Activated B cell treated with CpG ODN at 0.5 μM for 24 hours (primary cell): ENCODE measurements at regions of chr2 and their contacts with region 1.

Region 1: DNA sequence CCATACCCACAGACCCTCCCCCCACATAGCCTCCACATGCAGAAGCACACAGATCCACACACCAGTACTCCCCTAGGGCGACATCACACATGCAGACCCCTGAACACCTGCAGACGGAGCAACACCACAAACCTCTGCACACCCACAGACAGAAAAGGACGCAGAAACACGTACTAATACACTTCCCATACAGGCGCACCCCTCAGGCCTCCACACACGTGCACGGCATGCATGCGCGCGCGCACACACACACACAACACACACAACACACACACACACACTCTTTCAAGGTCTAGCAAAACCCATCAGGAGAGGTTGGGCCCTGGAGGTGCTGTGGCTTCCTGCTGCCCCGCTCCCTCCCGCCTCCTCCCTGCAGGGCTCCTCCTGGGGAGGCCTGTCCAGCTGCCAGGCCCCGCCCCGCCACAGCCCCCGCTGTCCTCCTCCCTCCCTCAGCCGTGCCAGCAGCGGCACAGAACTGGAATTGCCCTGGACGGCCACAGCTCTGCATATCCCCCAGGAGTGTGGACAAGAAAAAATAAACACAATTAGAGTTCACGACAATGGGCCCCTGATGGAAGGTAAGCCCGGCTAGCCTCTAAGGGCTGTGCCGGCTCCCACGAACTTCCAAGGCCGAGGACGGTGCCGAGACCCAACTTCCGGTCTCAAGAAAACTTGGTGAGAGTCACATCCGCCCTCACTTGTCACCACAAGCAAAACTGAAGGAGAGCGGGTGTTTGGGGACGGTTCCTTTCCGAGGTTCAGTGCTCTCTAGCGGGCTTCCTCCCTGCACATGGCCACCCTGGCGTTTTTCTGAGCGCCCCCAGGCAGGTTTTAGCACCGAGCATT is 6.8 kb downstream of the ZFP36L2 start:
- DNase-seq: peak; percentile 58
- ATAC-seq: peak; percentile 54
- H3K4me3 Mint-ChIP-seq: peak overlapping the region; percentile 92
- H3K27ac Mint-ChIP-seq: peak overlapping the region; percentile 99
- H3K4me1 Mint-ChIP-seq: peaks cover 71% of the 10 kb centered on the region
- H3K27me3 Mint-ChIP-seq: peaks cover 2% of the 10 kb centered on the region
- CTCF ChIP-seq: no peak

Region 2: DNA sequence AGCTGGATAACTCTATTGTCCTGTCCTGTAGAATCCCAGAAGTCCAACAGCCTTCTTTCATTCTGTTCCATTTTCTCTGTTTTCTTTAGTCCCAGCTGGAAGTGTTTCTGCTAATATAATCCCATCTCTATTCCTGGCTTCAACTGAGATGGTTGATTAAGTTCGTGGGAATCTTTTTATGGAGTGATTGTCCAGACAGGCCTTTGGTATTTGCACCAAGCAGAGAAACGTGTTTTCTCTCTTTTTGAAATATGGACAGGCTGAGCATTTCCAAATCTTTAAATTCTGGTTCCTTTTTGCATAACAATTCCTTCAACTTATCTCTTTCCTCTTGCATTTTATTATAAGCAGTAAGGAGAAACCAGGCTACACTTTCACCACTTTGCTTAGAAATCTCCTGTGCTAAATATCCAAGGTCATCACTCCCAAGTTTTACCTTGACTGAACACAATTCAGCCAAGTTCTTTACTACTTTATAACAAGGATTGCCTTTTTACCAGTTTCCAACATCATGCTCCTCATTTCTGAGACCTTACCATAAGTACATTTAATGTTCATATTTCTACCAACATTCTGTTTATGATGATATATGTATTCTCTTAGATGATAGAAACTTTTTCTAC is 102.0 kb before region 1 on chr2:
- CTCF ChIA-PET with region 1: no interaction called
- POLR2A ChIA-PET with region 1: no interaction called
- intact Hi-C with region 1: no loop called
- DNase-seq: no peak
- ATAC-seq: no peak
- H3K4me3 Mint-ChIP-seq: no peak overlapping the region
- H3K27ac Mint-ChIP-seq: no peak overlapping the region
- H3K4me1 Mint-ChIP-seq: peaks cover 1% of the 10 kb centered on the region
- H3K27me3 Mint-ChIP-seq: no peaks in the 10 kb centered on the region
- CTCF ChIP-seq: no peak

Region 3: DNA sequence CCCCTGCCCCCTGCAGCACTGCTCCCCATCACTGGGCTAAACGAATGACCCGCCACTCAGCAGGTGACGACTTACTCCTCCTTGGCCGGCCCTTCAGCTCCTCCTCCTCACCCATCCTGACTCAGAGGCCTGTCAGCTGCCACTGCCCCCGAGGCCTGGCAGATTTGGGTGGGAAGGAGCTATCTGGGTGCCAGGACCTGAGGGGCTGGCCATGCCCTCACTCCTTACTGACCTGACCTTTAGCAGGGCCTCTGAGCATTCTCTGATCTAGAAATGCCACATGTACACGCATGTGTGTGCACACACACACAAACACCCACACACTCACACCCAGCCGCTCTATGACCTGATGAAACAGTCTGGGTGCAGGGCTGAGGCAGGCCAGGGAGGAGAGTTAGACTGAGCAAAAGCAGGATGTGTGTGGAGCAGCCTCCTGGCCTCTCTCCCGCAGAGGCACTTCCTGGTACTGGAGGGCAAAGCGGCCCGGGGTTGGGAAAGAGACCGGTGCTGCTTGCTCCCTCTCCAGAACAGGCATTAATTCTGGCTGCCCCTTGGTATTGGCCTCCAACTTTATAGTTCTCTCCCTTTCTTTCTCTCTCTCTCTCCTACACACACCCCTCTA is 61.2 kb before region 1 on chr2:
- CTCF ChIA-PET with region 1: no interaction called
- POLR2A ChIA-PET with region 1: interaction called, 6 read pairs
- intact Hi-C with region 1: loop called (anchors 1 kb)
- DNase-seq: no peak
- ATAC-seq: peak; percentile 9
- H3K4me3 Mint-ChIP-seq: peak overlapping the region; percentile 71
- H3K27ac Mint-ChIP-seq: peak overlapping the region; percentile 96
- H3K4me1 Mint-ChIP-seq: peaks cover 47% of the 10 kb centered on the region
- H3K27me3 Mint-ChIP-seq: no peaks in the 10 kb centered on the region
- CTCF ChIP-seq: no peak

Region 4: DNA sequence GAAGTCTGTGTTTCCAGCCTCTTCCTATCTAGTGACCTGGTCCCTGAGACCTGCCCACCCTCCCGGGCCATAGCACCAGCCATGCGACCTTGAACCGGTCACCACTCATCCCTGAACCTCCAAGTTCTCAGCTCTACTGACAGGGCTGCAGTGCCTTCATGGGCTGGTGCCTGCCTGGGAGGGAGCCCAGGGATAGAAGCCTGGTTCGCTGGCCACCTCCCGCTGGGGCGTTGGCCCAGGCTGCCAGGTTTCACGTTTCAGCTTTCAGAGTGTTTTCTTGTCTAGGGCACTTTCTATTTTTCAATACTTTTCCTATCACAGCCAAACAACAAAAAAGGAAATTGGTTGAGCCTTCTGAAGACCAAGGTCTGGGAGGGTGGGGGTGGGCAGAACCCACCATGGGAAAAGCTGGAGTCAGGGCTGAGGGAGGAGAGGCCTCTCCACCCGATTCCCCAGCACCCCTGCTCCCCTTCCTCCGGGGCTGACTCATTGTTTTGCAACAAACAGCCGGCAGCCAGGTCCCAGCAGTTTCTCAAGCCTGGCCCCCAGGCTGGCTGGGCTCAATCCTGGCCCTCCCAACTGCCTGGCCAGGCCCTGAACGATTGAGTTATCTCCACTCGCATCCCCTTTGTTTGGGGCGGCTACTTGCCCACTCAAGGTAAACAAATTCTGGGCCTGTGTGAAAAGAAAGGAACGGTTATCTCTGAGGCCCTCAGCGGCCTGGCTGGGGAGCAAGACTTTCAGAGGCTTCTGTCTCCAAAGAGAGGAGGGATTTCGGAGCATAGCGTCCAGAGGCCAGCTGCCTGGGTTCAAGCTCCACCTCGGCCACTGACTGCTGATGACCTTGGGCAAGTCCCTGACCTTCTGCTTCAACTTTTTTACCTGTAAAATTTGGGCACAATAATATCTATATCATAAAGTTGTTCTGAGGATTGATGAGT is 40.7 kb before region 1 on chr2:
- CTCF ChIA-PET with region 1: interaction called, 5 read pairs
- POLR2A ChIA-PET with region 1: interaction called, 344 read pairs
- intact Hi-C with region 1: loop called (anchors 1 kb)
- DNase-seq: no peak
- ATAC-seq: no peak
- H3K4me3 Mint-ChIP-seq: no peak overlapping the region
- H3K27ac Mint-ChIP-seq: no peak overlapping the region
- H3K4me1 Mint-ChIP-seq: peaks cover 53% of the 10 kb centered on the region
- H3K27me3 Mint-ChIP-seq: no peaks in the 10 kb centered on the region
- CTCF ChIP-seq: no peak

Region 5: DNA sequence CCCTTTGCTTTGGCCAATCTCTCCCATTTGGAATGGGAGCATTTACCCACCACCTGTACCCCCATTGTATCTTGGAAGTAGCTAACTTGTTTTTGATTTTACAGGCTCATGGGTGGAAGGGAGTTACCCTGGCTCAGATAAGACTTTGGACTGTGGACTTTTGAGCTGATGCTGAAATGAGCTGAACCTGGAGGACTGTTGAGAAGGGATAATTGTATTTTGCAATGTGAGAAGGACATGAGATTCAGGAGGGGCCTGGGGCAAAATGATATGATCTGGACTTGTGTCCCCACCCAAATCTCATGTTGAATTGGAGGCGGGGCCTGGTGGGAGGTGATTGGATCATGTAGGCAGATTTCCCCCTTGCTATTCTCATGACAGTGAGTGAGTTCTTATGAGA is 65.4 kb after region 1 on chr2:
- CTCF ChIA-PET with region 1: no interaction called
- POLR2A ChIA-PET with region 1: no interaction called
- intact Hi-C with region 1: no loop called
- DNase-seq: no peak
- ATAC-seq: no peak
- H3K4me3 Mint-ChIP-seq: no peak overlapping the region
- H3K27ac Mint-ChIP-seq: no peak overlapping the region
- H3K4me1 Mint-ChIP-seq: no peaks in the 10 kb centered on the region
- H3K27me3 Mint-ChIP-seq: no peaks in the 10 kb centered on the region
- CTCF ChIP-seq: no peak